ENCODE measurements at regions of chr10 and their contacts with region 1.

Region 1: GRCh38 chr10:28879875-28880682 is 202.8 kb downstream of the BAMBI start:
- DNase-seq: peak; percentile 21 to 78 (median 74)
- ATAC-seq: peak; percentile 82 to 87
- H3K4me3 ChIP-seq: peak overlapping the region; percentile 7
- H3K27ac ChIP-seq: peak overlapping the region; percentile 88
- H3K4me1 ChIP-seq: no peaks in the 10 kb centered on the region
- H3K27me3 ChIP-seq: no peaks in the 10 kb centered on the region

Region 2: DNA sequence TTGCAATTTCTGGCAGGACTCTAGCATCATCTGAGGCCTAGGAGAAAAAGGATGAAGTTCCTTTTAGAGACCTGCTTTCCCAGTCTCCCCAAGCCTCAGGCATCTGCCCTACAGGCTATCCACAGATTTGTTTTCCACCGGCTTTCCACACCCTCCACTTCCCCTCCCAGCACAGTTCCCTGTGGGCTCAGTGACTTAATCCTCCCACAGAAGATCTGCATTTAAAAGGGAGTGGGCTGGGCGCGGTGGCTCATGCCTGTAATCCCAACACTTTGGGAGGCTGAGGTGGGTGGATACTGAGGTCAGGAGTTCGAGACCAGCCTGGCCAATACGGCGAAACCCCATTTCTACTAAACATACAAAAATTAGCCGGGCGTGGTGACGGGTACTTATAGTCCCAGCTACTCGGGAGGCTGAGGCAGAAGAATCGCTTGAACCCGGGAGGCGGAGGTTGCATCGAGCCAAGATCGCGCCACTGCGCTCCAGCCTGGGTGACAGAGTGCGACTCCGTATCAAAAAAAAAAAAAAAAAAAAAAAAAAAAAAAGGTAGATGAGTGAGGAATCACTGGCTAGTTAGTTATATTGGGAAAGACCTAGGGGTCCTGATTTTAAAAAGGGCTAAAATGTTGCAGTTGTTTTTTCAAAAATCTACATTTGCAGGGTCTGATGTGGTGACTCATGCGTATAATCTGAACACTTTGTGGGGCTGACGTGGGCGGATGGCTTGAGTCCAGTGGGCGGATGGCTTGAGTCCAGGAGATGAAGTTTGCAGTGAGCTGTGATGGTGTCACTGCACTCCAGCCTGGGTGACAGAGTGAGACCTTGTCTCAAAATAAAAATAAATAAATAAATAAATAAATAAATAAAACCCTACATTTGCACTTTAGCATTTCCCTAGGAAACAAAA is 83.2 kb before region 1 on chr10:
- intact Hi-C with region 1: loop called in 1 of 4 experiments (anchors 10 kb)
- DNase-seq: peak; percentile 86 to 93 (median 89)
- ATAC-seq: peak; percentile 92 to 96
- H3K4me3 ChIP-seq: no peak overlapping the region
- H3K27ac ChIP-seq: no peak overlapping the region
- H3K4me1 ChIP-seq: no peaks in the 10 kb centered on the region
- H3K27me3 ChIP-seq: no peaks in the 10 kb centered on the region

Region 3: GRCh38 chr10:28807760-28808613 is 72.1 kb before region 1 on chr10:
- intact Hi-C with region 1: loop called in 1 of 4 experiments (anchors 5 kb)
- DNase-seq: no peak
- ATAC-seq: peak; percentile 71 to 79
- H3K4me3 ChIP-seq: no peak overlapping the region
- H3K27ac ChIP-seq: peak overlapping the region; percentile 57
- H3K4me1 ChIP-seq: peaks cover 4% of the 10 kb centered on the region
- H3K27me3 ChIP-seq: no peaks in the 10 kb centered on the region

Region 4: GRCh38 chr10:29119374-29119773 is 239.3 kb after region 1 on chr10:
- intact Hi-C with region 1: no loop called
- DNase-seq: peak; percentile 53 to 78 (median 74)
- ATAC-seq: peak; percentile 41 to 56
- H3K4me3 ChIP-seq: no peak overlapping the region
- H3K27ac ChIP-seq: no peak overlapping the region
- H3K4me1 ChIP-seq: no peaks in the 10 kb centered on the region
- H3K27me3 ChIP-seq: no peaks in the 10 kb centered on the region

Measured in right cardiac atrium (tissue), 5 donors.